PC-9 (cell line): ENCODE measurements at regions of chr3 and their contacts with region 1.

Region 1: GRCh38 chr3:193780810-193781472 is 187.9 kb downstream of the OPA1 start:
- DNase-seq: peak; percentile 89 to 96
- H3K4me3 ChIP-seq: no peak overlapping the region
- H3K27ac ChIP-seq: peak overlapping the region; percentile 98
- H3K4me1 ChIP-seq: peaks cover 59% of the 10 kb centered on the region
- H3K27me3 ChIP-seq: no peaks in the 10 kb centered on the region
- CTCF ChIP-seq: peak; percentile 99

Region 2: GRCh38 chr3:193719735-193720134 is 61.2 kb before region 1 on chr3:
- CTCF ChIA-PET with region 1: no interaction called
- POLR2A ChIA-PET with region 1: no interaction called
- intact Hi-C with region 1: no loop called
- DNase-seq: no peak
- H3K4me3 ChIP-seq: no peak overlapping the region
- H3K27ac ChIP-seq: no peak overlapping the region
- H3K4me1 ChIP-seq: no peaks in the 10 kb centered on the region
- H3K27me3 ChIP-seq: no peaks in the 10 kb centered on the region
- CTCF ChIP-seq: no peak

Region 3: DNA sequence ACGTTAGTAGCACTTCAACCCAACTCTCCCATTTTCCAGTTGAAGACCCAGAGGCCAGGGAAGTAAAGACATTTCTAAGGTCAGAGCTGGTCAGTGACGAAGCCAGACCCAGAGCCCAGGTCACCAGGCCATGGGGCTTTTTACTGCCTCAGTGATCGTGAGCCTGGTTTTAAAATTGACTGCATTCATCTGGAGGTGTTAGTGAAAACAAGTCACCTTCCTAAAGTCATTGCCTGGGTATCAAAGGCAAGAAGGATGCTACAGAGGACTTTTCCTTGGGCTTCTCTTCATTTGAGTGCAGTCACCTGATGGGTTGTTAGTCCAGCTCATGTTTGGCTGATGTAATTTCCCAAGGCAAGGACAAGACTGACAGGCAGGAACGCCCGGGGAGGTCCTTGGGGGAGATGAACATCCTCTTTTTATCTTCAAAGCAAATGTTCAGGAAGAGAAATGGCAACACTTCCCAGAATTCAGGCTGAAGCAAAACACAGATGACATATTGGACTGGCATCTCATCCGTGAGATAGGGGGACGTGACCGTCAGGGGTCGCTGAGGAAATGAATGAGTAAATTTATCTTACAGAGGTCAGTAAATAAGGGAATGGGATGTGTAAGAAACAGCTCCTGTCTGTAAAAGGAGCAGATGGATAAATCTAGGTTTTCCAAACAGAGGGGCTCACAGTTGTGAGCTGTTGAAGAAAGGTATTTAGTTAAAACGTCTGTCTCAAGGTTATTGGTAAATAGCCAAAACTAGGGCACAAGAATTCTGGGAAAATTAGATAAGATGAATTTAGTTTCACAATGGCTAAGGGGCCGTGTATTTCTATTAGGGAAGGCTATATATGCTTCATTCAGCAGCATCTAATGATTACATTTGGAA is 13.3 kb after region 1 on chr3:
- CTCF ChIA-PET with region 1: no interaction called
- POLR2A ChIA-PET with region 1: no interaction called
- intact Hi-C with region 1: no loop called
- DNase-seq: no peak
- H3K4me3 ChIP-seq: no peak overlapping the region
- H3K27ac ChIP-seq: no peak overlapping the region
- H3K4me1 ChIP-seq: peaks cover 28% of the 10 kb centered on the region
- H3K27me3 ChIP-seq: no peaks in the 10 kb centered on the region
- CTCF ChIP-seq: no peak

Region 4: DNA sequence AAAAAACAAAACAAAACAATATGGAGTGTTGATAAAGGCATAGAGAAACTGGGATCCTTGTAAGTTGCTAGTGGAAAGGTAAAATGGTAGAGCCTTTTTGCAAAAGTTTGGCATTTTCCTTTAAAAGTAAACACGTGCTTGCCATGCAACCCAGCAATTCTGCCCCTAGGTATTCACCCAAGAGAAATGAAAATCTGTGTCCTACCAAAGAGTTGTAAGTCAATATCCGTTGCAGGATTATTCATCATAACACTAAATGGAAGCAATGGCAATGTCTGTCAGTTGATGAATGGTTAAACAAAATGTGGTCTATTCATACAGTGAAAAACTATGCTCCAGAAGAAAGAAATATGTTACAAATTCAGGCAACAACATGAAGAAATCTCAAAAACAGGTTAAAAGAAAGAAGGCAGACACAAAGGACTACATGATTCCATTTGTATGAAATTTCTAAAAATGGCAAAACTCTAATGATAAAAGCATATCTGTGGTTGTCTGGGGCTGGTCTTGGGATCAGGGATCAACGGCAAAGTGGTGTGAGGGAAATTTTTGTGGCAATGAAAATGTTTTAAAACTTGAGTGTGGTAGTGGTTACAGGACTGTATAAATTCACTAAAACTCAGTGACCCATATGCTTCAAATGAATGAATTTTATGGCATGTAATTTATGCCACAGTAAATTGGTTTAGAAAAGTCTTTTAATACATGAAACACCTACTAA is 41.7 kb after region 1 on chr3:
- CTCF ChIA-PET with region 1: no interaction called
- POLR2A ChIA-PET with region 1: no interaction called
- intact Hi-C with region 1: no loop called
- DNase-seq: no peak
- H3K4me3 ChIP-seq: no peak overlapping the region
- H3K27ac ChIP-seq: no peak overlapping the region
- H3K4me1 ChIP-seq: peaks cover 31% of the 10 kb centered on the region
- H3K27me3 ChIP-seq: no peaks in the 10 kb centered on the region
- CTCF ChIP-seq: no peak

Region 5: GRCh38 chr3:193851941-193852674 is 71.2 kb after region 1 on chr3:
- CTCF ChIA-PET with region 1: interaction called, 3 read pairs
- POLR2A ChIA-PET with region 1: interaction called, 13 read pairs
- intact Hi-C with region 1: loop called (anchors 1 kb)
- DNase-seq: peak; percentile 82 to 98
- H3K4me3 ChIP-seq: peak overlapping the region; percentile 49
- H3K27ac ChIP-seq: peak overlapping the region; percentile 98
- H3K4me1 ChIP-seq: peaks cover 70% of the 10 kb centered on the region
- H3K27me3 ChIP-seq: no peaks in the 10 kb centered on the region
- CTCF ChIP-seq: no peak

Region 6: GRCh38 chr3:193946945-193947344 is 166.0 kb after region 1 on chr3:
- CTCF ChIA-PET with region 1: interaction called, 3 read pairs
- POLR2A ChIA-PET with region 1: no interaction called
- intact Hi-C with region 1: loop called (anchors 1 kb)
- DNase-seq: peak; percentile 83 to 87
- H3K4me3 ChIP-seq: no peak overlapping the region
- H3K27ac ChIP-seq: no peak overlapping the region
- H3K4me1 ChIP-seq: peaks cover 16% of the 10 kb centered on the region
- H3K27me3 ChIP-seq: no peaks in the 10 kb centered on the region
- CTCF ChIP-seq: no peak

Region 7: DNA sequence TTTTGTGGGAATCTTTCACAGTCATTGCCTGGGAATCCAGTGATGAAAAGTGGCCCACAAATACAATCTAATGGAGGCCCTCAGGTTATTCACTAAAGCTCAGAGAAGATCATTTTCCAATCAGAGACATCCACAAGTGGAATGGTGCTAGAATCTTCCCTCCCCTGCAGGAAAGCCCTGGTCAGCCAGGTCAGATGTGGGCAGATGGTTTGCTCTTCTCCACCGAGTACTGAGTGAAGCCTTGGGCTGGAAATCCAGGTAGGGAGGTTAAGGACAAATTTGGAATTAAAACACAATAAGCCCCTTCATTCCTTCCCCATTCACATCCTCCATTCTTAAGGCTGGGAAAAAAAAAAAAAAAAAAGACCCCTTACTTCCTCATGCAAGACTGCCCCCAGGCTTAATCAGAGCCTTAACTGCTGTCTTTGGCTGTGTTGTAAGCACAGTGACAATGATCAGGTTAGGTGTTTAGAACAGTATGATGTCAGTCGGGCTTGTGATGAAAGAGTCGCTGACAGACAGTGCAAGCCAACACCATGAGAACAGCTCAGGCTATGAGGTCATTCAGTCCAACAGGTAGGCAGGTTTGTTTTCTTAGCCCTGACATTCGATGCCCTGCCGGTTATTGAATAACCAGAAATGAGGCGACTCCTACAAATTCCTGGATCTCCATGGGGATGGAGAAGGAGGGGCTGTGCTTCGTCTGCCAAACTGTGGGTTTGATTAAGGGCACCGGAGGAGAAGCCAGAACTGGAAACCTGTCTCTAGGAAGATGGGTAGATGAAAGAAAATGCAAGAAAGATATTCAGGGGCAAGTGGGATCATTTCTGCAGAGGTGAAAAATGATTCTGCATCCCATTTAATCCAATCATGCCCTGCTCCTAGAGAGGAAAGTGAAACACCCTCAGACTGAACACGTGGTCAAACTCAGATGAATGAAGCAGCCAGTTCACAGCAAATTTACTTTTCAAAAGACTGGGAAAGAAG is 331.5 kb after region 1 on chr3:
- CTCF ChIA-PET with region 1: interaction called, 4 read pairs
- POLR2A ChIA-PET with region 1: no interaction called
- intact Hi-C with region 1: loop called (anchors 1 kb)
- DNase-seq: peak; percentile 85 to 100
- H3K4me3 ChIP-seq: peak overlapping the region; percentile 2; the same call in 1 of the 2 replicates
- H3K27ac ChIP-seq: peak overlapping the region; percentile 38
- H3K4me1 ChIP-seq: peaks cover 18% of the 10 kb centered on the region
- H3K27me3 ChIP-seq: no peaks in the 10 kb centered on the region
- CTCF ChIP-seq: no peak

Region 8: GRCh38 chr3:194269610-194270145 is 488.7 kb after region 1 on chr3:
- CTCF ChIA-PET with region 1: interaction called, 12 read pairs
- POLR2A ChIA-PET with region 1: no interaction called
- intact Hi-C with region 1: no loop called
- DNase-seq: peak; percentile 82 to 88
- H3K4me3 ChIP-seq: peak overlapping the region; percentile 38; the same call in 1 of the 2 replicates
- H3K27ac ChIP-seq: peak overlapping the region; percentile 91
- H3K4me1 ChIP-seq: peaks cover 72% of the 10 kb centered on the region
- H3K27me3 ChIP-seq: no peaks in the 10 kb centered on the region
- CTCF ChIP-seq: peak; percentile 76

Region 9: GRCh38 chr3:194404365-194405140 is 623.6 kb after region 1 on chr3:
- CTCF ChIA-PET with region 1: no interaction called
- POLR2A ChIA-PET with region 1: no interaction called
- intact Hi-C with region 1: loop called (anchors 1 kb)
- DNase-seq: peak; percentile 38 to 56
- H3K4me3 ChIP-seq: no peak overlapping the region
- H3K27ac ChIP-seq: no peak overlapping the region
- H3K4me1 ChIP-seq: no peaks in the 10 kb centered on the region
- H3K27me3 ChIP-seq: no peaks in the 10 kb centered on the region
- CTCF ChIP-seq: peak; percentile 96